Right cardiac atrium (tissue), 5 donors: ENCODE measurements at regions of chr10 and their contacts with region 1.

Region 1: DNA sequence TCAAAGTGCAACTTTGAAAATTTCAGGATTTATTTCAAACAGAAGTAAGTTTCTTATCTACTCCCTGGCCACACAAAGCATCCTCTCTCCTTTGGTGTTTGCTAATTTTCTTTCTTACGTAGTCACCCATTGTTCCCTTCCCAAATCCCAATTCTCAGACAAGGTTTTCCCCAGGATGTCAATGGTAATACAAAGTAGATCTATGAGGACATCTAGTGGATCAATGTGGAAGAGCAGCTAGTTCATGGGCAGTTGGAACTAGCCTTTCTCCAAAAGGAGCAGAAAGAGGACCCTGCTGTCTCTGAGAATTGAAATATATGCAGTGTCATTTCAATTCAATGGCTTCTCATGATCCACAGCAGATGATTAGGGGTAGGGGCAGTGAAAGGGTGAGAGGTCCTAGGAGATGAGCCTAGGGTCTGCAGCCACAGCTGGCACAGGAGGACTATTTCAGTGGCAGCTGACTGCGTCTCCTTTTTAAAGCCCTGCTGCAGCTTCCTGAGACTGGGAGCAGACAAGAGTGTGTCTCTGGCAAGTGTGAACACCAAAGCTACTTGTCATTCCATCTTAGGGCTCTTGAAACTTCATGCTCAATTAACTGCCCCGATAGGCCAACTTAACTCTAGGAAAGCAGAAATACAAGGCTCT is 632.6 kb downstream of the KCNMA1 start:
- DNase-seq: no peak
- ATAC-seq: peak; percentile 65 to 79
- H3K4me3 ChIP-seq: no peak overlapping the region
- H3K27ac ChIP-seq: no peak overlapping the region
- H3K4me1 ChIP-seq: peaks cover 2% of the 10 kb centered on the region
- H3K27me3 ChIP-seq: no peaks in the 10 kb centered on the region

Region 2: DNA sequence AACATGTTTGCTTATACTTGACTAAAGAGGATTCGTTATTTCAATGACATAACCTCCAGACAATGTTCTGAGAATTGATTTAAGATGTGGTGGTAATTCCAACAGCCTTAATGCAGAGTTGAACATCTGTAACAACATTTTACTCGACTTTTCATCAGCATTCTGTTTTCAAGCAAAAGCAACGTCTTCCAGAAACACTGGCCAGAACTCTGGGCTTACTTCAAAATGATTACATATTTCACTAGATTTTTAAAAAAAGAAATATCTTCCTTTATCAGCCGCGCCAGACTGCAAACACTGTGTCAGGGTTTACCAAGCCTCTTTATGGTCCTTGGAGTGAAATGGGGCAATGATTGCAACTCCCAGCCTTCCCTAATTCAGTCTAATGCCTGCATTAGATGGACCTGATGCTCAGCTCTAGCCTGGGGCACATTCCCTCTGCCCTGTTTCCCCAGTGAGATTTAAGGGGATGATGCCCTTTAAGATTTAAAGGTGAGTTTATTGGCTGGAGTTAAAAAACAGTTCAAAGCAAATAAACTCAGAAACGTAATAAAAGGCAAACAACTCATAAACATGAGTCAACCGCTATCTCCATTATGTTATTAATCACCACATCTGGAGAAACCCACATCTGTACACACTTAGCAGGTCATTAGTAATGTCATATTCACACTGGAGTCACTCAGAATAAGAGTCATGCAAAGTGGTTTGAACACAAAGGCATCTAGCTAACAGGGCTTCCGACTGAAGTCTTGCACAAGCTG is 31.3 kb before region 1 on chr10:
- intact Hi-C with region 1: no loop called
- DNase-seq: no peak
- ATAC-seq: no peak
- H3K4me3 ChIP-seq: no peak overlapping the region
- H3K27ac ChIP-seq: no peak overlapping the region
- H3K4me1 ChIP-seq: no peaks in the 10 kb centered on the region
- H3K27me3 ChIP-seq: peaks cover 2% of the 10 kb centered on the region

Region 3: DNA sequence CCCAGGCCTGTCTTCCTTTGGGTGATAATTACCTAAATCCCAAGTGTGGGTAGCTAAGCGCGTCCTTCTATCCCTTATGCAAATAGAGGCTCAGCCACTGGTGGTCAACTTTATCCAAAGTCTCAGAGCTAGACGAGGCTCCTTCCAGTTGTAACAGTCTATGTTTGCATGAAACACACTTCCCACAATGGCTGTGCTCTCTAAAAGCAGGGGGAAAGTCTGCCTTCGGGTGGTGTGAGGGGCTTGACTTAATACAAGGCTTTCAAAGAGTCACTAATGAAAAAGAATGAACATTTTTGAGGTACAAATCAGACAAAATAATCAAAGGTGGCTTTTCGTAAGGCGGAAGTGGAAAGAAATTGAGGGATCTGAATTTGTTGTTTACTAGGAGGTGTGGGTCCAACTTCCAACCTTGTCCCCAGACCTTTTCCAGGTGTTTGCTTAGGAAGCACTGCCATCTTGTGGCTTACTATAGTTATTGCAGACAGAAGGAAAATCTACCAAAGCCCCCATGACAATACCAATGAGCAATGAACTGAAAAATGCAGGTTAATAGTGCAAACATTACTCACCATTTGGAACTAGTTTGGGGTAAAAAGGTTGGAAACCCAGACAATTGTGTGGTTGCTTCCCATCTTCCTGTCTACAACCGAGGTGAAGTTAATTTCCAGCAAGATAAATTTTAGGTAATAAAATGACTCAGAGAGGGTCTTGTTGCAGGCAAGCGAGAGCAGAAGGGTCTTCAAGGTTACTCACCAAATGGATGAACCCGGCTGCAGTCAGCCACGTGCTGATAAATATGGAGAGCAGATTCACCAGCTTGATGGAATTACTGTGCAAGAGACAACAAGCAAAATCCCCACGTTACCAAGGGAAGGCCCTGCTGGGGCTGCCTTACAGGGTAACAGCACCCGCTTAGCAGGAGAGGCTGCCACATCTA is 106.8 kb after region 1 on chr10:
- intact Hi-C with region 1: loop called in 1 of 4 experiments (anchors 10 kb)
- DNase-seq: no peak
- ATAC-seq: peak; percentile 50 to 57
- H3K4me3 ChIP-seq: no peak overlapping the region
- H3K27ac ChIP-seq: no peak overlapping the region
- H3K4me1 ChIP-seq: peaks cover under 1% of the 10 kb centered on the region
- H3K27me3 ChIP-seq: no peaks in the 10 kb centered on the region